H1 (cell line): ENCODE measurements at regions of chr17 and their contacts with region 1.

Region 1: GRCh38 chr17:4498461-4499397 is at the start of gene SPNS2:
- DNase-seq: peak in 1 of 2 experiments; percentile 85
- H3K4me3 ChIP-seq: peak within 1 kb of the TSS; percentile 46 to 71 (median 51)
- H3K27ac ChIP-seq: no peak within 1 kb of the TSS
- H3K4me1 ChIP-seq: peaks cover 0 to 13% (median 8%) of the 10 kb centered on the region in 4 experiments; a peak in 4 of 7 replicates
- H3K27me3 ChIP-seq: peaks cover 23 to 49% (median 45%) of the 10 kb centered on the region in 4 experiments
- CTCF ChIP-seq: no peak
- EP300 ChIP-seq: no peak
- POLR2A ChIP-seq: no peak
- RAD21 ChIP-seq: no peak
- total RNA-seq, gene SPNS2: 0.98 and 1.5 TPM in 2 replicates

Region 2: GRCh38 chr17:4509401-4509800 is 10.7 kb after region 1 on chr17:
- CTCF ChIA-PET with region 1: interaction called, 14 read pairs
- POLR2A ChIA-PET with region 1: interaction called, 3 read pairs
- DNase-seq: no peak
- H3K4me3 ChIP-seq: no peak overlapping the region
- H3K27ac ChIP-seq: no peak overlapping the region
- H3K4me1 ChIP-seq: peaks cover 0 to 7% (median 5%) of the 10 kb centered on the region in 4 experiments; a peak in 5 of 7 replicates
- H3K27me3 ChIP-seq: no peaks in the 10 kb centered on the region; a peak in 2 of 7 replicates
- CTCF ChIP-seq: no peak
- EP300 ChIP-seq: no peak
- POLR2A ChIP-seq: no peak
- RAD21 ChIP-seq: no peak

Region 3: GRCh38 chr17:4534026-4534914 is 35.5 kb after region 1 on chr17:
- CTCF ChIA-PET with region 1: interaction called, 12 read pairs
- POLR2A ChIA-PET with region 1: interaction called, 7 read pairs
- DNase-seq: no peak
- H3K4me3 ChIP-seq: no peak overlapping the region
- H3K27ac ChIP-seq: no peak overlapping the region
- H3K4me1 ChIP-seq: peaks cover 0 to 29% (median 16%) of the 10 kb centered on the region in 4 experiments; a peak in 6 of 7 replicates
- H3K27me3 ChIP-seq: peaks cover 0 to 36% (median 21%) of the 10 kb centered on the region in 4 experiments; a peak in 4 of 7 replicates
- CTCF ChIP-seq: no peak
- EP300 ChIP-seq: no peak
- POLR2A ChIP-seq: 0 out of 3 replicates have a peak, but pooled peaks of 1 of the 2 experiments have one; percentile 2
- RAD21 ChIP-seq: no peak